ENCODE measurements at regions of chr1 and their contacts with region 1.

Region 1: DNA sequence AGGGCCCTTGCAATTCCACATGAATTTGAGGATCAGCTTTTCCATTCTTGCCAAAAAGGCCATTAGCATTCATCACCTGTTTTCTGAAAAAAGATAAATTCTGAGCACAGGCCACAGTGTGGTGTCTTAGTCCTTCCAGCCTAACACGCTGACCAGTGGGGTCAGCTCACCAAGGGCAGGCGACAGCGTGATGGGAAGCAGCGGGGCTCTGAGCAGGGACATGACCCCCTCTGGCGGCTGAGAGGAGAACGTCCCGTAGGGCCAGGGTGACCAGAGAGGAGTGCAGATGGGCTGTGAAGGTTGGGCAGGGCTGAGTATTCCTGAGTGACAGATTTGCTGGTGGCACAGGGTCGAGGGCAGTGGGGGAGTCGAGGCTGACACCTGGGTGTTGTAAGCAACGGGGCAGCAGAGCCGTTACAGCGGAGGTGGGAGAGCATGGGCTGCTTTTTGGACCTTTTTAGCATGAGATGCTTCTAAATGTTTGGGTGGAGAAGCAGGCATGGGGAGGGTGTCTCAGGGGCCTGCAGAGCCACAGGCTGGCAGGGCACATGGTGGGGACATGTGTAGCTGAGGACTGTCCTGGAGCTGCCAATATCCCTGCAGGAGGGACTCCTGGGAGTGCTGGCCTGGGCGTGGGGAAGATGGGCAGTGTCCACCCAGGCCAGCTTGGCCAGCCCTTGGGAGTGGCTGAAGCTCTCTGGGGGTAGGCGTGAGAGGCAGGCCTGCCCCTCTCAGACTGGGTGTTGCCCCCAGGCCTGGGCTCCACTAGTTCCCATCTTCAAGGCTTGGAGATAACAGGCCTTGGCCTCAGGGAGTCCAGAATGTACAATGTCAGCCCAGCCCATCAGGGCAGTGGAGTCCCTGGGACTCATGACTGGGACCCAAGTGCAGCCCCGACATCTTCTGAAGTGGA is 8.6 kb upstream of the CALML6 start:
- DNase-seq: peak; percentile 81
- ATAC-seq: peak; percentile 47
- H3K4me3 Mint-ChIP-seq: no peak overlapping the region
- H3K27ac Mint-ChIP-seq: peak overlapping the region; percentile 5
- H3K4me1 Mint-ChIP-seq: peaks cover 21% of the 10 kb centered on the region
- H3K27me3 Mint-ChIP-seq: no peaks in the 10 kb centered on the region

Region 2: GRCh38 chr1:1778663-1779447 is 127.6 kb before region 1 on chr1:
- CTCF ChIA-PET with region 1: interaction called, 14 read pairs
- POLR2A ChIA-PET with region 1: interaction called, 11 read pairs
- DNase-seq: peak; percentile 88
- ATAC-seq: peak; percentile 66
- H3K4me3 Mint-ChIP-seq: peak overlapping the region; percentile 72
- H3K27ac Mint-ChIP-seq: peak overlapping the region; percentile 97
- H3K4me1 Mint-ChIP-seq: peaks cover 72% of the 10 kb centered on the region
- H3K27me3 Mint-ChIP-seq: no peaks in the 10 kb centered on the region

Region 3: DNA sequence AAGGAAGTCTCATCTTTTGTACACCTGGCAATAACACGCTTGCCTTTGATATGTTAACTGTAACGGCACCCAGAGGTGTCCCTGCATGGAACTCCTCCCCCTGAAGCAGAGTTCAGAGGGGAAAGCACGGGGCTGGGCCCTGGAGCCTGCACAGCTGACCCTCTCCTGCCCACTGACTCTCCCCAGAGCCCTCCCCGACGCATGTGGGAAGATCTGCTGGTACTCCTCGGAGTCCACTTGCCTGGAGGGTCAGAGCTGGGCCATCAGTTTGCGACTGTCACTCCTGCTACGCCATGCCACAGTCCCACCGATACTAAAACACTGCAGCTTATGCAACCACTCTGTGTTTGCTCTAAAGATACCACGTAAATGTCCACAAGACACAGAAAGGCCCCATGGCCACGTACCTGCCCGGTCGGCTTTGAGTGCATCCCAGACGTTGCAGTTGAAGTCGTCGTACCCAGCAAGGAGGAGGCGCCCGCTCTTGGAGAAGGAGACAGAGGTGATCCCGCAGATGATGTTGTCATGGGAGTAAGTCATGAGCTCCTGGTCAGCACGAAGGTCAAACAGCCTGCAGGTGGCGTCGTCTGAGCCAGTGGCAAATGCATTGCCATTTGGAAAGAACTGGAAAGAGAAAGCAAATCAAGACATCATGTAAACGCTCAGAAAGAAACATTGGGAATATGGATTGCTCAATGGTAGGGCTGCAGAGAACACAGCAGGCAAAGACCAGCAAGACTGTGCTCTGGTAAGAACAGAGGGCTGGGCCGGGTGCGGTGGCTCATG is 117.6 kb before region 1 on chr1:
- CTCF ChIA-PET with region 1: interaction called, 10 read pairs
- POLR2A ChIA-PET with region 1: no interaction called
- DNase-seq: no peak
- ATAC-seq: no peak
- H3K4me3 Mint-ChIP-seq: no peak overlapping the region
- H3K27ac Mint-ChIP-seq: no peak overlapping the region
- H3K4me1 Mint-ChIP-seq: no peaks in the 10 kb centered on the region
- H3K27me3 Mint-ChIP-seq: no peaks in the 10 kb centered on the region

Region 4: GRCh38 chr1:1826356-1827088 is 79.9 kb before region 1 on chr1:
- CTCF ChIA-PET with region 1: interaction called, 11 read pairs
- POLR2A ChIA-PET with region 1: no interaction called
- DNase-seq: no peak
- ATAC-seq: no peak
- H3K4me3 Mint-ChIP-seq: no peak overlapping the region
- H3K27ac Mint-ChIP-seq: no peak overlapping the region
- H3K4me1 Mint-ChIP-seq: peaks cover 29% of the 10 kb centered on the region
- H3K27me3 Mint-ChIP-seq: no peaks in the 10 kb centered on the region

Region 5: DNA sequence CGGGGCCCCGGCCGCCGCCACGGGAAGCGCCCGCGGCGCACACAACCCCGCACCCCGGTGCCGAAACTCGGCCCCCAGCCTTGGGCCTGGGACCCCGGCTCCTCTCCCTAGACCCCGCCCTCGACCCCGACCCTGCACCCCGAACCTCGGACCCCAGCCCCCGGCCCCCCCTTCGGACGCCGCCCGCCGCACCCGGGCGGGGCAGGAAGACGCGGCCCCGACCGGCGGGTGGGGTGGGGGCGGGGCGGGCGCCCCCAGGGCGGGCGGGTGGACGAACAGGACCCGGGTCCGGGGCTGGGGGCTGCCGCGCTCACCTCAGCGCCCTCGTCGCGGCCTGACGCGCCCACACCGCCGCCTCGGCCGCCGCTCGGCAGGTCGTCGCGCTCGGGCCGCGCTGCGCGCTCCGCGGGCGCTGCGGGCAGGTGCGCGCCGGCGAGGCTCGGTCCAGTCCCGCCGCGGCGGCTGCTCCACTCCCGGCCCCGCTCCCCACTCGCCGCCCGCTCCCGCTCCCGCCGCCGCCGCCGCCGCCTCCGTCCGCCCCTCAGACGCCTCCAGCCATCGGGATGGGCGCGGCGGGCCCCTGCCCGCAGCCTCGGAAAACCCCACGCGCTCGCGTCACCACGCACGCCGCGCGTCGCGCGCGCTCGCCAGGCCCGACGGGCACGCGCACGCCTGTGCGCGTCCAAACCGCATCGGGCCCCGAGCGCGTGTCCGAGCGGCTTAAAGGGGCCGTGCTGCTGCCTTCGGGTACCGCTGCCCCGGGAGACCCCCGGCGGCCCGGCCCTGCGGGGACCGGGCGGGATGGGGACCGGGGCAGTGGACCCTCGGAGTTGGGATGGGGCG is 15.7 kb before region 1 on chr1 and contains the start of gene GNB1:
- CTCF ChIA-PET with region 1: interaction called, 17 read pairs
- POLR2A ChIA-PET with region 1: interaction called, 7 read pairs
- DNase-seq: peak; percentile 87
- ATAC-seq: peak; percentile 60
- H3K4me3 Mint-ChIP-seq: peak within 1 kb of the TSS; percentile 90
- H3K27ac Mint-ChIP-seq: peak within 1 kb of the TSS; percentile 94
- H3K4me1 Mint-ChIP-seq: peaks cover 54% of the 10 kb centered on the region
- H3K27me3 Mint-ChIP-seq: peaks cover under 1% of the 10 kb centered on the region
- total RNA-seq, gene GNB1: 398 TPM

Region 6: DNA sequence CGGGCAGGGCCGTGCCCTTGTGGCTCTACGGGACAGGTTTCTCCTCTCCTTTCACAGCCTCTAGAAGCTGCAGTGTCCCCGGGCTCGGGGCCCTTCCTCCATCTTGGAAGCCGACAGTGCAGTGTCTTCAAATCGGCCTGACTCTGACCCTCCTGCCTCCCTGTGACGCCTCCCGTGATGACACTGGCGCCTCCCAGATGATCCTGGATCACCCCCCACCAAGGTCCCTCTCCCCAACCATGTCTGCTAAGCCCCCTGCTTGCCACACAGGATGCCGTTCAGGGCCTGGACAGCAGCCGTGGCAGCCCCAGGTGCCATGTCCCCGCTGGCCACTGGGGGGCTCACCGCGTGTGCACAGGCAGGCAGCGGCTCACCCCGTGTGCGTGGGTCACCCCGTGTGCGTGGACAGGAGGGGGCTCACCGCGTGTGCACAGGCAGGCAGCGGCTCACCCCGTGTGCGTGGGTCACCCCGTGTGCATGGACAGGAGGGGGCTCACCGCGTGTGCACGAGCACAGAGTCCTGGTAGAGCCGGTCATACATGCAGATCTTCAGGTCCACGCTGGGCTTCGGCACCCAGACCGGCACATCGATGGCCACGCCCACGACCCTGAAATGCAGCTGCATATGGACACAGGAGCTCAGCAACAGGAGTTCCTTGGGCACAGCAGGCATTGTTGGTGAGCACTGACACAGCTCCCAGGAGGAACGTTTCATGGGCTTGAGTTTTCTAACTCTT is 37.6 kb after region 1 on chr1:
- CTCF ChIA-PET with region 1: no interaction called
- POLR2A ChIA-PET with region 1: no interaction called
- DNase-seq: peak; percentile 71
- ATAC-seq: peak; percentile 98
- H3K4me3 Mint-ChIP-seq: no peak overlapping the region
- H3K27ac Mint-ChIP-seq: peak overlapping the region; percentile 60
- H3K4me1 Mint-ChIP-seq: peaks cover 4% of the 10 kb centered on the region
- H3K27me3 Mint-ChIP-seq: peaks cover 3% of the 10 kb centered on the region

Region 7: GRCh38 chr1:2044510-2045319 is 138.3 kb after region 1 on chr1:
- CTCF ChIA-PET with region 1: interaction called, 14 read pairs
- POLR2A ChIA-PET with region 1: no interaction called
- DNase-seq: peak; percentile 77
- ATAC-seq: peak; percentile 87
- H3K4me3 Mint-ChIP-seq: peak overlapping the region; percentile 42
- H3K27ac Mint-ChIP-seq: no peak overlapping the region
- H3K4me1 Mint-ChIP-seq: peaks cover 24% of the 10 kb centered on the region
- H3K27me3 Mint-ChIP-seq: peaks cover 12% of the 10 kb centered on the region

Region 8: DNA sequence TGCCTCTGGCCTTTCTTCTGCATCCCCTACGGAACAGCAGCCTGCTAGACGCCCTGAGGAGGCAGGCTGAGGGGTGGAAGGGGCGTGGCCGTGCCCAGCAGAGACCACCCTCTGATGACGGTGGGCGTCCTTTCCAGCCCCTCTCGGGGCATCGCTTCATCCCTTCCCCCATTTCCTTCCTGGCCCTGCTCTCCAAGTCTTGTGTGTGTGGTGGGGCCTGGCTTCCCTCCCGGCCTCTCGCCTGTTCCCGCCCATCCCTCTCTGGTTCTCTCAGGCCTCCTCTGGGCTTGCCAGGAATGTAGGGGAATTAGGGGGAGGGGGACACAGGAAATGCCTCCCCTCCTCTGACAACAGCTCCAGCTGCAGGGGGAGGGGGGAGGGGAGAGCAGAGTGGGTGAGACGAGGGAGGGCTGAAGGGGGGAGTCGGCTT is 372.8 kb after region 1 on chr1:
- CTCF ChIA-PET with region 1: no interaction called
- POLR2A ChIA-PET with region 1: no interaction called
- DNase-seq: no peak
- ATAC-seq: no peak
- H3K4me3 Mint-ChIP-seq: no peak overlapping the region
- H3K27ac Mint-ChIP-seq: peak overlapping the region; percentile 20
- H3K4me1 Mint-ChIP-seq: peaks cover 22% of the 10 kb centered on the region
- H3K27me3 Mint-ChIP-seq: no peaks in the 10 kb centered on the region